Tibial artery (tissue), 4 donors: ENCODE measurements at regions of chrX and their contacts with region 1.

Region 1: GRCh38 chrX:1385824-1386223 is 6.1 kb downstream of the SLC25A6 start:
- DNase-seq: peak in 1 of 2 donors; percentile 57
- H3K4me3 ChIP-seq: no peak overlapping the region
- H3K27ac ChIP-seq: no peak overlapping the region
- H3K4me1 ChIP-seq: peaks cover 0 to 25% (median 22%) of the 10 kb centered on the region in 4 donors
- H3K27me3 ChIP-seq: no peaks in the 10 kb centered on the region
- CTCF ChIP-seq: no peak

Region 2: DNA sequence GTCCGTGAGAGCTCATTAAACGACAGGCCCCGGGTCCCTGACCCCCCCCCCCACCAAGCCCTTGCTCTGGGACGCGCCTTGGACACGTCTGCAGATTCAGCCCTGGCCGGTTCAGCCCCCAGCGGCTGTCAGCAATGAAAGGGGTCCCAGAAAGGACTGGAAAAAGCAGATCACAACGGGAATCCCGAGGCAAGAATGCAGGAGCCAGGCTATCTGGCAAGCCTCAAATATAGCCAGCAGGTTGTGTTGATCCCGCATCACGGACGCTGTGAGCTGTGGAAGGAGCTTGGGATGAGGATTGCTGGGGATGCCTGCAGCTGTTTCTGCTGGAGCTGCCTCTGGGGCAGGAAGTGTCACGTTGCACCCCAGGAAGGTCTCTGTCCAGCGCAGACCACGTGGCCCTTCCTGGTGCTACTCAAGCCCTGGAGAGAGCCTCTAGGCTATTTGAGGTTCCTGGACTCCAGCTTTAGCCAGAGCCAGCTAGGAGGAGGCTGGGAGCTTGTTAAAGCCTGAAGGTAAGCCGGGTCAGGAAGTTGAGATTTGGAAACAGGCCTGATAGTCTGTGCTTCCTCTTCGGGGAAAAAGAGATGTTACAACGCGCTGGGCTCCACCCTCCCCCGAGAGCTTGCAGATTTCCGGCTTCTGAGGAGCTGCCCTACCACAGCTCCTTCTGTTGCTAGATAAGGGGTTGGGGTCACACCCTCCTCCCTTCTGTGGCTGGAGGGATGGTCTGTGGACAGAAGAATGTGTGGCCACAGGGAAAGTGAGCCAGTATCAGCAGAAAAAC is 136.5 kb before region 1 on chrX:
- intact Hi-C with region 1: no loop called
- DNase-seq: peak; percentile 57 to 69
- H3K4me3 ChIP-seq: peak overlapping the region in 1 of 2 donors; percentile 22
- H3K27ac ChIP-seq: no peak overlapping the region
- H3K4me1 ChIP-seq: peaks cover 0 to 15% (median 12%) of the 10 kb centered on the region in 4 donors
- H3K27me3 ChIP-seq: peaks cover 0 to 26% of the 10 kb centered on the region in 2 donors
- CTCF ChIP-seq: no peak

Region 3: DNA sequence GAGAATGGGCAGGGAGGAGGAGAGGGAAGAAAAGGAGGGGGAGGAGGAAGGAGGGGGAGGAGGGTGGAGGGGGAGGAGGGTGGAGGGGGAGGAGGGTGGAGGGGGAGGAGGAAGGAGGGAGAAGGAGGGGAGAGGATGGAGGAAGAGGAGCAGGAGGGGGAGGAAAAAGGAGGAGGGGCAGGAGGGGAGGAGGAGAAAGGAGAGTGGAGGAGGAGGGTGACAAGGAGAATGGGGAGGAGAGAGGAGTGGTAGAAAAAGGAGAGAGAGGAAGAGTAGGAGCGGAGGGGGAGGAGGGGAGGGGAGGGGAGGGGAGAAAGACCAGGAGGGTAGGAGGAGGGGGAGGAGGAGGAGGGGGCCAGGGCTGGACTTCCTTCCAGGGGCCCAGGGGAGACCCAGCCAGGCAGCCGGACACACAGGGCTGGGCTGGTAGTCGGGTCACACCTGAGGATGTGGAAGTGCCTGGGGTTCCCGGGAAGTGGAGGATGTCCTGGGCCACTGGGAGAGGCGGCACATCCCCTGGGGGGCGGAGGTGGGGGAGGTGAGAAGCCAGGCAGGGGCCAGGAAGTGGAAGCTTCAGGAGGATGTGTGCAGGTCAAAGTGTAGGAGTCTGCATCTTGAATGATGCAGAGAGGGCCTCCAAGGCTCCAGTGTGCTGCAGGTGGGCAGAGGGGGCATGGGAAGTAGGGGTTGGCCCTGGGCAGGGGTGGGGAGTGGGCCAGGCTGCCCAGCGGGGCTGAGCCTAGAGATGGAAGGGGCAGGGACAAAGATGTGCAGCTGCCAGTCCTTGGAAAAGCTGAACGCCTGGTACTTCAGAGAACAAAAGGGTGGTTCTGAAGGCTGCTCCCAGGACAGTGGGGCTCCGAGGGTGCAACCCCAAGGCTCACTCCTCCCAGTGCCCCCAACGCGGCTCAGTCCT is 30.4 kb before region 1 on chrX:
- intact Hi-C with region 1: loop called (anchors 1 kb)
- DNase-seq: no peak
- H3K4me3 ChIP-seq: no peak overlapping the region
- H3K27ac ChIP-seq: no peak overlapping the region
- H3K4me1 ChIP-seq: no peaks in the 10 kb centered on the region
- H3K27me3 ChIP-seq: no peaks in the 10 kb centered on the region
- CTCF ChIP-seq: no peak

Region 4: GRCh38 chrX:1794586-1794985 is 408.8 kb after region 1 on chrX:
- intact Hi-C with region 1: no loop called
- DNase-seq: no peak
- H3K4me3 ChIP-seq: no peak overlapping the region
- H3K27ac ChIP-seq: no peak overlapping the region
- H3K4me1 ChIP-seq: peaks cover 0 to 7% (median under 1%) of the 10 kb centered on the region in 4 donors
- H3K27me3 ChIP-seq: no peaks in the 10 kb centered on the region
- CTCF ChIP-seq: no peak